ENCODE measurements at regions of chr4 and their contacts with region 1.

Region 1: DNA sequence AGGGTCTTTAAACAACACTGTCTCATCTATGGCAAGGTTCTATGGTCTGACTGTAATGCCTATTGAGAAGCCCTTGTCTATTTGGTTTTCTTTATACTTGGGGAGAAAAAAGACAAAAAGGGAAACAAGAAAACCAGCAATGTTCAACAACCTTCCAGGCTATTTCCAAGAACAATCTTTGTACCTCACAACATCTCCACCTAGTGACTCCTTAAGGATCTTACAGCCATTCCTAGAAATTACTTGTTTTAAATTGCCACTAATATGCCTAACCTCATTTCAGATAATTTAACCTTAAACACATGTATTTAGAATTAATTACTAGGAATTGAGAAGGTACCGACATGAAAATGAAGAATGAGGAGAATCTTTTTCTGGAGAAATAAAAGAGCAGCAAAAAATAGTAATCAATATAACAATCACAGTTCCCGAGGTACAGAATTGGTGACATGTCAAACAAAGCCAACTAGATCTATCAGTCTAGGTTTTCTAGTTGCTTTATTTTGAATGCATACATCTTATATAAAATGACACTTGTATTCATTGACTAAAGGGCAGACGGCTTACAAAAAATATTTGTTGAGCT is 1.6 kb upstream of the RBM46 start:
- DNase-seq: peak; percentile 27 to 54 (median 46)
- H3K4me3 ChIP-seq: no peak overlapping the region
- H3K27ac ChIP-seq: no peak overlapping the region
- H3K4me1 ChIP-seq: peaks cover 0 to 3% (median 0%) of the 10 kb centered on the region in 4 experiments
- H3K27me3 ChIP-seq: peaks cover 2 to 35% (median 6%) of the 10 kb centered on the region in 5 experiments

Region 2: GRCh38 chr4:154626793-154627484 is 152.5 kb before region 1 on chr4:
- CTCF ChIA-PET with region 1: interaction called, 10 read pairs
- POLR2A ChIA-PET with region 1: no interaction called
- DNase-seq: peak; percentile 78 to 82 (median 80)
- H3K4me3 ChIP-seq: peak overlapping the region in 5 of 7 experiments; percentile 8 to 62 (median 53)
- H3K27ac ChIP-seq: no peak overlapping the region
- H3K4me1 ChIP-seq: peaks cover 0 to 11% (median 3%) of the 10 kb centered on the region in 4 experiments
- H3K27me3 ChIP-seq: peaks cover 2 to 27% (median 10%) of the 10 kb centered on the region in 5 experiments

Region 3: DNA sequence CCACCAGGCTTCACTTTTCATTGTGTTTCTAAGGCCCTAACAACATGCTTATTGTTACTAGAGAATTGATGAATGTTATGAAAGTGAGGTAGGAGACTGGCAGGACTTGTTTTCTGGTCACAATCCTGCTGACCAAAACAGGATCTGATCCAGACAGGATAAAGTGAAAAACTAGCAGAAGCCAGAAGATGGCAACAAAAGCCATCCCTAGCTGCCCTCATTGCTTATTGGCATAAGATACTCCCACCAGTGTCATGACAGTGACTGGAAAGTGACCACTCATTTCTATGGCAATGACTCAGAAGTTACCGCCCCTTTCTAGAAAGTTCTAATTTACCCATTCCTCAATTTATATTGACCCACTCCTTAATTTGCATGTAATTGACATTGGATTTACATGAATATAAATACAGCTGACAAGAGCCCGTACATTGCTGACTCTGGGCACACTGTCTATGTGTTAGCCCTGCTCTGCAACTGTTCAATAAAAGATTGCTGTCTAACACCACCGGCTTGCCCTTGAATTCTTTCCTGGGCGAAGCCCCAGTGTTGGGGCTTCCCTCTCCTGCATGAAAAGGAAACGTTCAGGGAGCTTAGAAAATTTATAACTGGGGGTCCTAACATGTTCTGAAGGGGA is 137.0 kb before region 1 on chr4:
- CTCF ChIA-PET with region 1: interaction called, 29 read pairs
- POLR2A ChIA-PET with region 1: no interaction called
- DNase-seq: no peak
- H3K4me3 ChIP-seq: no peak overlapping the region
- H3K27ac ChIP-seq: no peak overlapping the region
- H3K4me1 ChIP-seq: peaks cover 0 to 19% (median 5%) of the 10 kb centered on the region in 4 experiments
- H3K27me3 ChIP-seq: no peaks in the 10 kb centered on the region

Region 4: DNA sequence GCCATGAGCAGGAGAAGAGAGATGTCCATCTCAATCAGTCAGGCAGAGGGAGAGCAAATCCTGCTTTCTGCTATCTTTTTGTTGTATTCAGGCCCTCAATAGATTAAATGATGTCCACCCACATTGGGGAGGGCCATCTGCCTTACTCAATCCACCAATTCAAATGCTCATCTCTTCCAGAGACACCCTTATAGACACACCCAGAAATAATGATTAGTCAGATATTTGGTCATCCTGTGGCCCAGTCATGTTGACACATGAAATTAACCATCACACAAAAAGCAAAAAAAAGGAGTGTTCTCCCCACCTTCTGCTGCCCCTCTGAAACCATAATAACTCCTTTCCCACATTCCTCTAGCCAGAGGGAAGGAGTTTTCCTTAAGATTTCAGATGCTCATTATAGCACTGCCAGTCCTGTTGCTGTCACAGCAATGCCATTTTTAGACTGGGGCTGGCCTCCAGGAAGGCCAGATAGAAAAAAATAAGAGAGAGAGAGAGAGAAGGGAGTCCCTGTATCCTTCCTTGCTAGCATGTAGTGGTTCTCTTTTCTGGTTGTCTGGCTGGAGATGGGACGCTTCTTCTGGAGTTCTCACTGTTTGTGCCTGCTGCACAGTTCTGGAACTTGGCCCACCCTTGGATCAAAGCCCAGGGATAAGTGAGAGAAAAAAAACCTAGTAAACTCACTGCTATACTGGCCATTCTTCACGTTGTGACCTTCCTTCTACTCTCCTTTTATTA is 179.3 kb after region 1 on chr4:
- CTCF ChIA-PET with region 1: no interaction called
- POLR2A ChIA-PET with region 1: no interaction called
- DNase-seq: no peak
- H3K4me3 ChIP-seq: no peak overlapping the region
- H3K27ac ChIP-seq: no peak overlapping the region
- H3K4me1 ChIP-seq: no peaks in the 10 kb centered on the region
- H3K27me3 ChIP-seq: no peaks in the 10 kb centered on the region

Region 5: DNA sequence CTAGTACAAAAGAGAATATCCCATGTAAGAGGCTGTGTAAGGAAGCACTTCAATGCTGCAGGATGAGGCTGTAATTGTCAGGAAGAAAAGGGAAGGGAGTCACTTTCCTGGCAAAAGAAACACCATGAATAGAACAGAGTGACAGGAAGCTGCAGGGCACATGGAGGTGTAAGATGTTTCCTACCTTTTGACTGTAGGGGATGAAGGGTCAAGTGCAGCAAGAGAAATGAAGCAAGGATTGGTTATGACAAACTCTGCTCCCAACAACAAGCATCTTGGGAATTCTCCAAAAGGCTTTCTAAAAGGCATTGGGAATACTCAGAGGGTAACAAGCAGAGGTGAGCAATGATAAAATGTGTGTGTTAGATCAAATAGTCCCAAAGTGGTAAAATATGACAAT is 354.7 kb after region 1 on chr4:
- CTCF ChIA-PET with region 1: no interaction called
- POLR2A ChIA-PET with region 1: no interaction called
- DNase-seq: no peak
- H3K4me3 ChIP-seq: no peak overlapping the region
- H3K27ac ChIP-seq: no peak overlapping the region
- H3K4me1 ChIP-seq: no peaks in the 10 kb centered on the region
- H3K27me3 ChIP-seq: peaks cover 0 to 2% (median 0%) of the 10 kb centered on the region in 5 experiments

Measured in common myeloid progenitor, CD34-positive (primary cell).